Activated CD4-positive, alpha-beta memory T cell treated with anti-CD3 and anti-CD28 coated beads, Interleukin-2, amount 10 ng/mL, durations not matched to agents 7 days and 5 days (primary cell): ENCODE measurements at regions of chr5 and their contacts with region 1.

Region 1: GRCh38 chr5:82388181-82388580 is 110.0 kb upstream of the RPS23 start:
- DNase-seq: no peak
- H3K4me3 Mint-ChIP-seq: no peak overlapping the region
- H3K27ac Mint-ChIP-seq: no peak overlapping the region
- H3K4me1 Mint-ChIP-seq: peaks cover 16% of the 10 kb centered on the region
- H3K27me3 Mint-ChIP-seq: no peaks in the 10 kb centered on the region

Region 2: DNA sequence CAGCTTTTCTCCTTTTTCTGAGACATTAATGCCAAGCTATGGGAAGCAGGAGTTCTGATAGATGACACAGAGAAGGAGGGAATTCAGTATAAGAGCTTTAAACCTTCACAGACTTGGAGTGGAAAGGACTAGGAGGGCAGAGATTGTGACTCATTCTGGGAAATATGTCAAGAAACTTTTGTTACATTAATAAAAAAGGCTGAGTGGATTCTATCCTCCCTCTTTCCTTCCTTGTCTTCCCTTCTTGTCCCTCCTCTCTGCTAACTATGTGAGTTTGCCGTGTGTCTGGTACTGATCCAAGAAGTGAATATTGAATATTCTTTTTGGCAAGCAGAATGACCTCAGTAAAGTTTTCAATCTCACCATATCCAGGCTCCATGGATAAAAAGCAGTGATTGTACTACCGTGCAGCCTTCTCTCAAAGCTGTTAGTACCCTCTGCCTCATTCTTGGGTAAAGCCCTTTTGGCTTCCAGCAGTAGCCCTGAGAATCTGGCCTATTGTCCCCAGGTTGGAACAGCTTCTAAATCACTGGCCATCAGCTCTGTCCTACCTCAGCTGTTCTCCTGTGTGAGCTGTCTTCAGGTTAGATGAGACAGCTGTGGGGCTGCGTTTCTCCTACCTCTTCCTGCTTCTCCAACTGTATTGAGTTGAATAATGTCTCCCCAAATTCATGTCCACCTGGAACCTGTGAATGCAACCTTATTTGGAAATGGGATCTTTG is 342.5 kb before region 1 on chr5:
- CTCF ChIA-PET with region 1: no interaction called
- POLR2A ChIA-PET with region 1: no interaction called
- DNase-seq: no peak
- H3K4me3 Mint-ChIP-seq: no peak overlapping the region
- H3K27ac Mint-ChIP-seq: no peak overlapping the region
- H3K4me1 Mint-ChIP-seq: no peaks in the 10 kb centered on the region
- H3K27me3 Mint-ChIP-seq: no peaks in the 10 kb centered on the region

Region 3: DNA sequence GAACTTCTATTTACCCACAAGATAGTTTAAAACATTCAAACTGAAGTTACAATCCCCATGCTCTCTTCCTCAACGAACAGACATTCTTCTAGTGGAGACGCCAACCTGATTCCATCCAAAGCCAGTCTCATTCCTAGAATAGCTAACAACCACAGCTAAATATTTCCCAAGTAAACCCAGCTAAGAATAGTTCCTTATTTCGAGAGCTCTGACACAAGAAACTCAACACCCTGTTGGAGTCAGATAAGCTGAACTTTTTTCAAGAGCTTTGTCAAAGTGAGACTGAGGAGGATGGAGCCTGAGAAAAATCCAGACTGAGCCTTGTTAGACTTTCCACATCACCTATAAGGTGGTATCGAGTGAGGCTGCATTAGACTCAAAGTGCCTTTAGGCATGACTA is 53.3 kb before region 1 on chr5:
- CTCF ChIA-PET with region 1: no interaction called
- POLR2A ChIA-PET with region 1: no interaction called
- DNase-seq: no peak
- H3K4me3 Mint-ChIP-seq: no peak overlapping the region
- H3K27ac Mint-ChIP-seq: no peak overlapping the region
- H3K4me1 Mint-ChIP-seq: no peaks in the 10 kb centered on the region
- H3K27me3 Mint-ChIP-seq: peaks cover 3% of the 10 kb centered on the region

Region 4: DNA sequence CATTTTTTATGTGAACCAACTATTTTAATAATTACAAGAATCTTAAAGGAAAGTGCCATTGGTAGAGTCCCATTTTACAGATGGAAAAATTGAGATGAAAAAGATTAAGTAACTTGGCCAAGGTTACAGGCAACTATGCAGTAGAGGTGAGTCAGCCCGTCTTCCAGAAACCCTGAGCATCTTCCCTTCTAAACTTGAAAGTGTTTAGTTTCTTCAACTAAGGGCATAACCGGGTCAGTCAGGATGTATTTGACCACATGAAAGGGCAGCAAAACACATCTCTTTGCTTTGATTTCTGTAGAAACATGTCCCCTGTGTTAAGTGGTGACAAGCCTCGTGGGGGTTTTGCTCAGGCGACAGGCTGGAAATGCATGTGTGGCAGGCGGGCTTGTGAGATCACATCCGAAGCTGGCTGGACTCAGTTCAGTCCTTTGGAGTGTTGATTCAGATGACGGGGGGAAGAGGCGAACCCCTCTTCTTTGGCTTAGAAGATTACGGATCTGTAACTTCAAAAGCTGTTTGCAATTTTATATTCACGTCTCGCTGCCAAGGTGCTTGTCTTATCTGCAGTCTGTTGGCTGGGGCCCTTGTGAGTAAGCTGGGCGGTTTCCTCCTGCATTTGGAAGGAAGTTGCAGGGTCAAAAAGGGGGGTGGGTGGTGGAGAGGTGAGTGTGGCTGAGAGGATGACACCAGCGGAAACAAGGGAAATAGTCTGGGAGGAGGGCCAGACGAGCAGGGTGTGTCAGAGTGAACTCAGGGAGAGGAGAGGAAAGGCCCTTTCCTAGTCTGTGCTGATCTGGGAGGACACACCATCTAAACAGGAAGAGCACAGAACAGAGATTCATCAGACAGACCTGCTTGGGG is 31.1 kb before region 1 on chr5:
- CTCF ChIA-PET with region 1: interaction called, 5 read pairs
- POLR2A ChIA-PET with region 1: interaction called, 10 read pairs
- DNase-seq: peak; percentile 81
- H3K4me3 Mint-ChIP-seq: peak overlapping the region; percentile 57
- H3K27ac Mint-ChIP-seq: peak overlapping the region; percentile 94
- H3K4me1 Mint-ChIP-seq: peaks cover 78% of the 10 kb centered on the region
- H3K27me3 Mint-ChIP-seq: no peaks in the 10 kb centered on the region

Region 5: GRCh38 chr5:82405161-82405560 is 17.0 kb after region 1 on chr5:
- CTCF ChIA-PET with region 1: no interaction called
- POLR2A ChIA-PET with region 1: no interaction called
- DNase-seq: no peak
- H3K4me3 Mint-ChIP-seq: no peak overlapping the region
- H3K27ac Mint-ChIP-seq: no peak overlapping the region
- H3K4me1 Mint-ChIP-seq: no peaks in the 10 kb centered on the region
- H3K27me3 Mint-ChIP-seq: no peaks in the 10 kb centered on the region

Region 6: DNA sequence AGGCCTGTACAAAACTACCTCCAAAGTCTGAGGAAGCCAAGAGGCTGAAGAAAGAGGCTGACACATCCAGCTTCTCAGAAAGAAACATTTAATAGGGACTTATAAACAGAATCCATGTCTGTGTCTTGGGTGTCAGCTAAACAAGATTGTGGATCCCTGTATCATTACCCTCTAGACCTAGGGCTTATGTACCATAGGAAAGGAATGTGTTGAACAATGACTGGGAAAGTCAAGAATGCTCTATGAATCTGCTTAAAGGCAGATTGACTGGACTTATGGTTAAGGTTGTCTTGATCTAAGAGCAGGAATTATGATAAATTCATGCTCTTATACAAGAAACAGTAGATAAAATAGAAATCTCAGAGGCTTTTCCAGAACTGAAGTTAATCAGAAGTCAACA is 225.7 kb after region 1 on chr5:
- CTCF ChIA-PET with region 1: no interaction called
- POLR2A ChIA-PET with region 1: no interaction called
- DNase-seq: no peak
- H3K4me3 Mint-ChIP-seq: no peak overlapping the region
- H3K27ac Mint-ChIP-seq: no peak overlapping the region
- H3K4me1 Mint-ChIP-seq: no peaks in the 10 kb centered on the region
- H3K27me3 Mint-ChIP-seq: peaks cover 3% of the 10 kb centered on the region